ENCODE measurements at regions of chr7 and their contacts with region 1.

Region 1: GRCh38 chr7:129611246-129612111 is at the start of gene NRF1:
- DNase-seq: peak; percentile 84 to 98 (median 91)
- ATAC-seq: peak; percentile 87
- H3K4me3 ChIP-seq: peak within 1 kb of the TSS; percentile 75
- H3K4me3 Mint-ChIP-seq: peak within 1 kb of the TSS; percentile 100
- H3K27ac ChIP-seq: peak within 1 kb of the TSS; percentile 69 to 75
- H3K27ac Mint-ChIP-seq: peak within 1 kb of the TSS; percentile 95
- H3K4me1 ChIP-seq: peaks cover 44% of the 10 kb centered on the region
- H3K4me1 Mint-ChIP-seq: peaks cover 70% of the 10 kb centered on the region
- H3K27me3 ChIP-seq: no peaks in the 10 kb centered on the region
- H3K27me3 Mint-ChIP-seq: no peaks in the 10 kb centered on the region
- CTCF ChIP-seq: no peak
- total RNA-seq, gene NRF1: 35.4 to 36.1 TPM

Region 2: DNA sequence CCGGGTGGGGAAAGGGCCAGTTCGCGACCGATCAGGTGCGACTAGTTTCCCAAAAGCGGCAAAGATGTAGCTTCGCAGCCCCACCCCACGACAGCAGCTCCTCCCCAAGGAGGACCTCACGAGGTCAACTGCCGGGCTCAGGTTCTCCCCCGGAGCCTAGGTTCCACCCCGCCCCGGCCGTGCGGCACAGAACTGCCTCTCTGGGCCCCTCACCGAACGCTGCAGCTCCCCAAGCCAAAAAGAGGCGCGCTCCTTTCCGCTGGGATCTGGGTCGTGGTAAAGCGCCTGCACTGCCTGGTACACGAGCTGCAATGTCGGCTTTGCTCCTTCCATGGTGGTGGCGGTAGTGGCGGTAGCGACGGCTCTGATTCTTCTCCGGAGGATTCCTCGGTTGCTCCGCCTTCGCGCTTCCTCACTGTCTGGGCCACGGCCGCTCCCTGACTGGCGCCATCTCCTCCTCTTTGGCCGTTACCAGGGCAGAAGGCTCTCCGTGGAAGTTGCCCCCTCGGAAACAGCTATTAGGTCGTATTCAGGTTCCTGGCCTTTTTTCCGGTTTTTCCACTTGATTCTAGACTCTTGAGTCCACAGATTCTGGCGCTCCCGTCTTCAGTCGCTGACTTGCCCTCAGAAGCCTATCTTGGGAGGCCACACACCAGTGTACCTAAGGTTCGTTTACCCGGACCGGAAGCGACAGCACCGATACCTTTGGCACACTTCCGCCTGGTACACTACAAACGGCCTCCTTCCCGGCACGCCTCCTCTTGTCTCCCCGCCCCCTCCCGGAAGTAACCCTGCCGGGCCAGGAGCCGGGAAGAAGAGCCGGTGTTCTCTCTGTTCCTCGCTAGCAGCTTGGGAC is 556.8 kb before region 1 on chr7 and contains the start of gene TNPO3:
- CTCF ChIA-PET with region 1: no interaction called
- POLR2A ChIA-PET with region 1: no interaction called
- intact Hi-C with region 1: loop called in 1 of 2 experiments (anchors 5 kb)
- DNase-seq: peak; percentile 80 to 94 (median 86)
- ATAC-seq: peak; percentile 87
- H3K4me3 ChIP-seq: peak within 1 kb of the TSS; percentile 88
- H3K4me3 Mint-ChIP-seq: peak within 1 kb of the TSS; percentile 99
- H3K27ac ChIP-seq: peak within 1 kb of the TSS; percentile 91 to 98
- H3K27ac Mint-ChIP-seq: peak within 1 kb of the TSS; percentile 96
- H3K4me1 ChIP-seq: peaks cover 25% of the 10 kb centered on the region
- H3K4me1 Mint-ChIP-seq: peaks cover 49% of the 10 kb centered on the region
- H3K27me3 ChIP-seq: peaks cover 0 to 4% of the 10 kb centered on the region in 2 experiments
- H3K27me3 Mint-ChIP-seq: no peaks in the 10 kb centered on the region
- CTCF ChIP-seq: no peak
- total RNA-seq, gene TNPO3: 17.1 to 18.7 TPM

Region 3: GRCh38 chr7:129502376-129502776 is 109.1 kb before region 1 on chr7 and contains the start of gene SMKR1:
- CTCF ChIA-PET with region 1: interaction called, 5 read pairs
- POLR2A ChIA-PET with region 1: interaction called, 5 read pairs
- intact Hi-C with region 1: loop called in 1 of 2 experiments (anchors 2 kb)
- DNase-seq: peak; percentile 88 to 98 (median 94)
- ATAC-seq: peak; percentile 96
- H3K4me3 ChIP-seq: peak within 1 kb of the TSS; percentile 66
- H3K4me3 Mint-ChIP-seq: peak within 1 kb of the TSS; percentile 90
- H3K27ac ChIP-seq: peak within 1 kb of the TSS in 1 of 2 donors; percentile 13
- H3K27ac Mint-ChIP-seq: peak within 1 kb of the TSS; percentile 52
- H3K4me1 ChIP-seq: peaks cover 19% of the 10 kb centered on the region
- H3K4me1 Mint-ChIP-seq: peaks cover 6% of the 10 kb centered on the region
- H3K27me3 ChIP-seq: no peaks in the 10 kb centered on the region
- H3K27me3 Mint-ChIP-seq: no peaks in the 10 kb centered on the region
- CTCF ChIP-seq: no peak
- total RNA-seq, gene SMKR1: 0.22 to 0.49 TPM

Region 4: GRCh38 chr7:129635300-129636029 is 24.0 kb after region 1 on chr7:
- CTCF ChIA-PET with region 1: interaction called, 13 read pairs
- POLR2A ChIA-PET with region 1: interaction called, 9 read pairs
- intact Hi-C with region 1: loop called (anchors 1 kb)
- DNase-seq: peak; percentile 51 to 86 (median 59)
- ATAC-seq: peak; percentile 98
- H3K4me3 ChIP-seq: no peak overlapping the region
- H3K4me3 Mint-ChIP-seq: no peak overlapping the region
- H3K27ac ChIP-seq: no peak overlapping the region
- H3K27ac Mint-ChIP-seq: peak overlapping the region; percentile 19
- H3K4me1 ChIP-seq: peaks cover 11% of the 10 kb centered on the region
- H3K4me1 Mint-ChIP-seq: peaks cover 63% of the 10 kb centered on the region
- H3K27me3 ChIP-seq: no peaks in the 10 kb centered on the region
- H3K27me3 Mint-ChIP-seq: no peaks in the 10 kb centered on the region
- CTCF ChIP-seq: peak; percentile 76

Region 5: DNA sequence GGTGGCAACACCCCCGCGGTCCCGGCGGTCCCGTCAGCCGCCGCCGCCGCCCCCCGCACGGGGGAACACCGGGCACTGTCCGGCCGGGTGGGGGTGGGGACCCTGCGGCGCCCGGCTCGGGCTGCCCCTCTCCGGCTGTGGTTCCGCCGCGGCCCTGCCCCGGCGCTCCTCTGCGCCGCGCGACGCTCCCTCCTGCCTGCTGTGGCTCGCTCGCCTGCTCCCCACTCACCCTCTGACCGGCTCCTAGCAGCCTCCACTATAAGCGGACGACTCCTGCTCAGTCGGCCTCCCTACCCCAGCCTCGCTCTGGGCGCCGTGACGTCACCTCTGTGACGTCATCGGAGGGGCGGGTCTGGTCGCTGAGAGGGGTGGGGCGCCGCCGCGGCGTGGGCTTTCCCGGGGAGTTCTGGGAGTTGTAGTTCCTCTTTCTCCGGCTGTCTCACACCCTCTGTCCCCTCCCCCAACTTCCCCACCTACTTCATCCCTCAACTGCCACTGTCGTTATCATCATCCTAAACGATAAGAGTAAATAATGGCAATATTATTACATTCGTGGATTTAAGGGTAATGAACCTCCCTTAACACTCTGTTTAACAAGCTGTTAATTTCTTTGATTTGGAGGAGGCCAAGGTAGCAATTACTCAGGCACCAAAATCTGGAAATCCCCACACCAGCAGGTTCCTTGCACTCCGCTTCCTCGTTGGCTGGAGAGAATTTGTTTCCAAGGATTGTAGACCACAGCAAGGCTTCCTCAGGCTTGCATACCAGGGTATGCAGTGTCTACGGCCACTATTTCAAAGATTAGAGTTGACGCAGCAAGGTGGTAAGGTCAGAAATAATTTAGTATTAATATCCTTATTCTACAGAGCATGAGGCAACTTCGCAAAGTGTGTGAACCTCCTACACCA is 341.4 kb after region 1 on chr7 and contains the start of gene UBE2H:
- CTCF ChIA-PET with region 1: no interaction called
- POLR2A ChIA-PET with region 1: interaction called, 5 read pairs
- intact Hi-C with region 1: loop called in 1 of 2 experiments (anchors 5 kb)
- DNase-seq: peak; percentile 84 to 96 (median 91)
- ATAC-seq: peak; percentile 75
- H3K4me3 ChIP-seq: peak within 1 kb of the TSS; percentile 78
- H3K4me3 Mint-ChIP-seq: peak within 1 kb of the TSS; percentile 99
- H3K27ac ChIP-seq: peak within 1 kb of the TSS; percentile 82 to 89
- H3K27ac Mint-ChIP-seq: no peak within 1 kb of the TSS
- H3K4me1 ChIP-seq: peaks cover 35% of the 10 kb centered on the region
- H3K4me1 Mint-ChIP-seq: peaks cover 6% of the 10 kb centered on the region
- H3K27me3 ChIP-seq: no peaks in the 10 kb centered on the region
- H3K27me3 Mint-ChIP-seq: no peaks in the 10 kb centered on the region
- CTCF ChIP-seq: no peak
- total RNA-seq, gene UBE2H: 52.1 to 52.5 TPM

Region 6: GRCh38 chr7:130430841-130431666 is 819.6 kb after region 1 on chr7:
- CTCF ChIA-PET with region 1: no interaction called
- POLR2A ChIA-PET with region 1: no interaction called
- intact Hi-C with region 1: loop called in 1 of 2 experiments (anchors 10 kb)
- DNase-seq: no peak
- ATAC-seq: no peak
- H3K4me3 ChIP-seq: no peak overlapping the region
- H3K4me3 Mint-ChIP-seq: no peak overlapping the region
- H3K27ac ChIP-seq: no peak overlapping the region
- H3K27ac Mint-ChIP-seq: no peak overlapping the region
- H3K4me1 ChIP-seq: peaks cover 10% of the 10 kb centered on the region
- H3K4me1 Mint-ChIP-seq: peaks cover 17% of the 10 kb centered on the region
- H3K27me3 ChIP-seq: no peaks in the 10 kb centered on the region
- H3K27me3 Mint-ChIP-seq: no peaks in the 10 kb centered on the region
- CTCF ChIP-seq: no peak